H1 (cell line): ENCODE measurements at regions of chr19 and their contacts with region 1.

Region 1: GRCh38 chr19:1945899-1946298 is 4.9 kb downstream of the CSNK1G2 start:
- DNase-seq: peak in 1 of 2 experiments; percentile 92
- H3K4me3 ChIP-seq: no peak overlapping the region
- H3K27ac ChIP-seq: no peak overlapping the region
- H3K4me1 ChIP-seq: peaks cover 0 to 19% (median 9%) of the 10 kb centered on the region in 4 experiments; a peak in 6 of 7 replicates
- H3K27me3 ChIP-seq: no peaks in the 10 kb centered on the region
- CTCF ChIP-seq: peak; percentile 81 to 97 (median 89)
- EP300 ChIP-seq: no peak
- POLR2A ChIP-seq: no peak
- RAD21 ChIP-seq: peak; percentile 66 to 73

Region 2: GRCh38 chr19:1780272-1780958 is 165.5 kb before region 1 on chr19:
- CTCF ChIA-PET with region 1: no interaction called
- POLR2A ChIA-PET with region 1: no interaction called
- DNase-seq: no peak
- H3K4me3 ChIP-seq: no peak overlapping the region
- H3K27ac ChIP-seq: no peak overlapping the region
- H3K4me1 ChIP-seq: peaks cover 0 to 5% (median 2%) of the 10 kb centered on the region in 4 experiments; a peak in 3 of 7 replicates
- H3K27me3 ChIP-seq: peaks cover 22 to 57% (median 55%) of the 10 kb centered on the region in 4 experiments
- CTCF ChIP-seq: peak in 2 of 3 experiments; percentile 6 to 42; a peak in 3 of 4 replicates
- EP300 ChIP-seq: no peak
- POLR2A ChIP-seq: no peak
- RAD21 ChIP-seq: no peak

Region 3: DNA sequence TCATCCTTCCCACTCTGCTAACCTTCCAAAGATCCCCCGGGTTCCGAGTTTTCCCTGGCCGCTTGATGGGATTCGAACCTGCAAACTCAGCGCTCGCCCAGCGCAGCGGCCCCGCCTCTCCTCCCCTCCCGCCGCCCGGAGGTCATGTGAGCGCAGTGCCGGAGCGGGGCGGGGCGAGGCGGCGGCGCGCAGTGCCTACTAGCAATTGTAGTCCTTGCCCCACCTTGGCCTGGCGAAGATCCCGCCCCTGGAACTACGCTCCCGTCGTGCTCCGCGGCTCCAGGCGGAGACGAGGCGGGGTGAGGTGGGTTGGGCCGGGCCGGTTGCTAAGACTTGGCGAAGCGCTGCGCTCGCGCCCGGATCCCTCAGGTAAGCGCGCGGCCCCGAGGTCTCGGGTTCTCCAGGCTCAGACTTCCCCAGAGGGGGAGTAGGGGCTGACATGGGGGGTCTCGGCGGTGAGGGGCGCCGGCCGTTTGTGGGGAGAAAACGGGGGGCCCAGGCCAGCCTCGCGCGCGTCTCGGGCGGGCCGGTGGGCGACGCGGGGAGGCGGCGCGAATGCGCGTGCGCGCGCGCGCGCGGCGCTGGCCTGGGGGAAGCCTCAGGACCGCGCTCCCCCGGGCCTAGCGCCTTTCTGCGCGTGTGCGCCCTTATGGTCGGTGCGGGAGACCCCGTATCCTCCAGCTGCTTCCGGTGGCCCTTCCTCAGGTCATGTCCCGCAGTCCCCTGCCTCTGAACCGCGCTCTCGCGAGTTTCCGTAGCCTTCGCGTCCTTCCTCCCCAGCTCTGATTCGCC is 40.6 kb before region 1 on chr19 and contains the starts of genes ADAT3 and SCAMP4:
- CTCF ChIA-PET with region 1: interaction called, 10 read pairs
- POLR2A ChIA-PET with region 1: no interaction called
- DNase-seq: peak; percentile 94 to 95
- H3K4me3 ChIP-seq: peak within 1 kb of the TSS; percentile 51 to 71 (median 58)
- H3K27ac ChIP-seq: peak within 1 kb of the TSS; percentile 87
- H3K4me1 ChIP-seq: peaks cover 0 to 9% (median 8%) of the 10 kb centered on the region in 4 experiments; a peak in 5 of 7 replicates
- H3K27me3 ChIP-seq: no peaks in the 10 kb centered on the region
- CTCF ChIP-seq: no peak
- EP300 ChIP-seq: peak in 1 of 2 experiments; percentile 62; a peak in 1 of 3 replicates
- POLR2A ChIP-seq: peak in 1 of 2 experiments; percentile 82; a peak in 1 of 3 replicates
- RAD21 ChIP-seq: no peak
- total RNA-seq, gene ADAT3: 10.2 and 10.8 TPM in 2 replicates
- total RNA-seq, gene SCAMP4: 61.4 and 65.7 TPM in 2 replicates

Region 4: DNA sequence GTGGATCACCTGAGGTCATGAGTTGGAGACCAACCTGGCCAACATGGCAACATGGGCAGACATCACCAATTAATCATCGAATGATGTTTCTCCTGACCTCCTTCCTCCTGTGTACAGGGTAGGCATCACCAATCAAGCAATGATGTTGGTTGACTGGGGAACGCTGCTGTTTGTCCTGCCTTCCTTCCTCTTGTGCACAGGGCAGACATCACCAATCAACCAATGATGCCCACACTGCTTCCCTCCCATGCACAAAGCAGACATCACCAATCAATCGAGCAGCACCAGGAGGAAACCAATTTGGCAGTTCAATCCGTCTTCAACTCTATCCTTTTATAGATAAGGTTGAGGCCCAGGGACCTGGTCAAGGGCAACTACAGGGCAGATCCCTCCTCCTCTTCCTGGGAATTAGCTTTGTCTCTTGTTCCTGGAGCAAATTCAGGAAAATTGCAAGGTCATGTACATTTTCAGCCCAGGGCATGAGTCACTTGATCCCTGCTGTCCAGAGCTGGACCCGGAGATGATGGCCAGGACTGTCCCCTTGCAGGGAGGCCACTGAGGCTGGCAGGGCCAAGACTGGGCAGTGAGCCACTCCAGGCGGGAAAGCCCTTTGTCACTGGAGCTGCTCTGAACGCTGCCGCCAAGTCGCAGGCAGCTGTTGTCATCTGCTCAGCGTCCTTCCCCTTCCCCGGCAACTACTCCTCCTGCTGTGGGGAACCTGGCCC is 10.3 kb before region 1 on chr19:
- CTCF ChIA-PET with region 1: interaction called, 21 read pairs
- POLR2A ChIA-PET with region 1: interaction called, 13 read pairs
- DNase-seq: no peak
- H3K4me3 ChIP-seq: no peak overlapping the region
- H3K27ac ChIP-seq: no peak overlapping the region
- H3K4me1 ChIP-seq: peaks cover 0 to 8% (median 3%) of the 10 kb centered on the region in 4 experiments; a peak in 5 of 7 replicates
- H3K27me3 ChIP-seq: no peaks in the 10 kb centered on the region
- CTCF ChIP-seq: no peak
- EP300 ChIP-seq: no peak
- POLR2A ChIP-seq: no peak
- RAD21 ChIP-seq: no peak

Region 5: GRCh38 chr19:1970003-1970805 is 24.3 kb after region 1 on chr19:
- CTCF ChIA-PET with region 1: interaction called, 13 read pairs
- POLR2A ChIA-PET with region 1: interaction called, 3 read pairs
- DNase-seq: no peak
- H3K4me3 ChIP-seq: no peak overlapping the region
- H3K27ac ChIP-seq: no peak overlapping the region
- H3K4me1 ChIP-seq: no peaks in the 10 kb centered on the region
- H3K27me3 ChIP-seq: no peaks in the 10 kb centered on the region
- CTCF ChIP-seq: no peak
- EP300 ChIP-seq: no peak
- POLR2A ChIP-seq: no peak
- RAD21 ChIP-seq: no peak

Region 6: DNA sequence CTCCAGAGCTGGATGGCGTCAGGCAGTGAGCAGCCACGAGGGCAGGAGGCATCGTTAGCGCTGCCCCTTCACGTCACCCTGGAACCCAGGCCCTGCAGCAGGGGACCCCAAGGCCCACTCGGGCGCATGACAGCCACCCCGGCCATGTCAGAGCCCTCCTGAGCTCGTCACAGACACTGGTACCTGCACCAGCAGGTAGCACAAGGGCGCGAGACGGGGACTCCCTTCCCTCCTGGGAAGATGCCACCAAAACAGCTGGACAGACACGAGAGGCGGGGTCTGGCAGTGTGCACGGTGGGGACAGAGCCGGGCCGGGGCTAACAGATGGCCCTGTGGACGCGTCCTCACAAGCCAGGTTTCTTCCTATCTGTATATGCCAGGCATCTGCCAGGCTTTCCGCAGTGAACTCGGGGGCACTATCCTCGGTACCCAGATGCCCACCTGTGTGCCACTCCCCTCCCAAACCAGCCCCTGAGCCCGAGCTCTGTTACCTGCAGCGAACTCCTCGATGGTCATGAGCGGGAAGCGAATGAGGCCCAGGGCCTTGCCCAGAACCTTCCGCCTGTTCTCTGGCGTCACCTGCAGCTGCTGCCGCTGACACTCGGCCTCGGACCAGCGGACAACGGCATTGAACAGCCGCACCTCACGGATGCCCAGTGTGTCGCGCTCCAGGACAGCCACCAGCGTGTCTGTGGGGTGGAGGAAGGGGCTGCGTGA is 43.8 kb after region 1 on chr19:
- CTCF ChIA-PET with region 1: interaction called, 12 read pairs
- POLR2A ChIA-PET with region 1: interaction called, 4 read pairs
- DNase-seq: no peak
- H3K4me3 ChIP-seq: no peak overlapping the region
- H3K27ac ChIP-seq: no peak overlapping the region
- H3K4me1 ChIP-seq: no peaks in the 10 kb centered on the region
- H3K27me3 ChIP-seq: no peaks in the 10 kb centered on the region
- CTCF ChIP-seq: no peak
- EP300 ChIP-seq: no peak
- POLR2A ChIP-seq: no peak
- RAD21 ChIP-seq: no peak